H1 (cell line): ENCODE measurements at regions of chr13 and their contacts with region 1.

Region 1: DNA sequence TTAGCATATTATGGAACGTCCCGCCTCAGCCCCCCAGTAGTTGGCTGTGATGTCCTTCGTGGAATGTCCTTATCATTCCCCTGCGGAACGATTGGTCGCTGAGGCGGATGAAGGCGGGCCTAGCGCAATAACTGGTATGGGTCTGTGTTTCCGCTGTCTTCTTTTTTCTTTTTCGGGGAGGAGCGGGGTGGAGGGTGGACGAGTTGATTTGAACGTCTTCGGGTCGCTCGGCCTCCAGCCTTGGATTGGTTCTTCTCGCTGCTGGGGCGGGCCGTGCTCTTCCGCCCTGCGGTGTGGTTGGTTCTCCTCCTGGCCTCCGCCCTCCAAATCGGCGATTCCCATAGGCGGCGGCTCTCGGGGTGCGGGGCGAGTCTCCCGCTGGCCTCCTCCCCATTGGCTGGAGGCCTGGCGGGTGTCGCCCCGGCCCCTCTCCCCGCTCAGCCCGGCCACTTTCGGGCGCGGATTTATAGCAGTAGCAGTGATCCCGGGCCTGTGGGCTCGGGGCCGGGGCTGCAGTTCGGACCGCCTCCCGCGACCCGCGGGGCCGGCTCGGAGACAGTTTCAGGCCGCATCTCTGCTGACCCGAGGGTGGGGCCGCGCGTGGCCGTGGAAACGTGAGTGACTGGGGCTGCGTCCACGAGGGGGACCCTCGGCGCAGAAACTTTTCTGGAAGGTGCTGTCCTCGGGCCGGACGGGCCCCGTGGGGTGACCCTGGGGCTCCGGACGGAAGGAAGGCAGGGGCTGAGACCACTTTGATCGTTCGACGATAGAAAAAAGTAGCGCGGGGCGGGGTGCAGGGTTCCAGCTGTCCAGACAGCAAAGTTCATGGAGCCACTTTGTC is 2.1 kb downstream of the ING1 start:
- DNase-seq: peak; percentile 93 to 97
- H3K4me3 ChIP-seq: peak overlapping the region; percentile 77 to 98 (median 90)
- H3K27ac ChIP-seq: peak overlapping the region; percentile 24
- H3K4me1 ChIP-seq: peaks cover 0 to 2% (median 1%) of the 10 kb centered on the region in 4 experiments; a peak in 2 of 7 replicates
- H3K27me3 ChIP-seq: no peaks in the 10 kb centered on the region
- CTCF ChIP-seq: no peak
- EP300 ChIP-seq: no peak
- POLR2A ChIP-seq: peak in 1 of 2 experiments; percentile 63; a peak in 1 of 3 replicates
- RAD21 ChIP-seq: no peak

Region 2: DNA sequence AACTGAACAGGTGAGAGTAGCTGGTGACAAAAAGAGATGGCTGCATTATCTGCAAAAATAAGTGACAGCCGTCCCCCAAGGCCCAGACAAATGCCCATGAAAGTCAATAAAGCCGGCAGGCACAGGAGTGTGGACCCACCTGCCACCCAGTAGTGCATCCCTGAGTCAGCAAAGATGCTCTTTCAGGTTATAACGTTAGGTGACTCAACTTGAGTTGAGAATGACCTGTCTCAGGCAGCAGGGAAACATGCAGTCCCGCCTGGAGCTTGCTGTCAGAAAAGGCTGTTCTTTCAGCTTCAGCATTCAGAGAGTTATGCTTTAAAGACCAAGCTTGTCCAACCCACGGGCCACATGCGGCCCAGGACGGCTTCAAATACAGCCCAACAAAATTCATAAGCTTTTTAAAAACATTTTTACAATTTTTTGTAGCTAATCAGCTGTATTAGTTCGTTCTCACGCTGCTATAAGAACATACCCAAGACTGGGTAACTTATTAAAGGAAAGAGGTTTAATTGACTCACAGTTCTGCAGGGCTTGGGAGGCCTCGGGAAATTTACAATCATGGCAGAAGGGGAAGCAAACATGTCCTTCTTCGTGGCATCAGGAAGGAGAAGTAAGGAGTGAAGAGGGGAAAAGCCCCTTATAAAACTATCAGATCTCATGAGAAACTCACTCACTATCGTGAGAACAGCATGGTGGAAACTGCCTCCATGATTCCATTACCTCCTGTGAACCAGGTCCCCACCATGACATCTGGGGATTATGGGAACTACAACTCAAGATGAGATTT is 264.5 kb before region 1 on chr13:
- CTCF ChIA-PET with region 1: no interaction called
- POLR2A ChIA-PET with region 1: no interaction called
- DNase-seq: no peak
- H3K4me3 ChIP-seq: no peak overlapping the region
- H3K27ac ChIP-seq: no peak overlapping the region
- H3K4me1 ChIP-seq: peaks cover 0 to 5% (median 1%) of the 10 kb centered on the region in 4 experiments; a peak in 4 of 7 replicates
- H3K27me3 ChIP-seq: no peaks in the 10 kb centered on the region
- CTCF ChIP-seq: no peak
- EP300 ChIP-seq: no peak
- POLR2A ChIP-seq: no peak
- RAD21 ChIP-seq: no peak

Region 3: GRCh38 chr13:110690516-110690915 is 25.1 kb before region 1 on chr13:
- CTCF ChIA-PET with region 1: interaction called, 6 read pairs
- POLR2A ChIA-PET with region 1: interaction called, 14 read pairs
- DNase-seq: no peak
- H3K4me3 ChIP-seq: no peak overlapping the region
- H3K27ac ChIP-seq: no peak overlapping the region
- H3K4me1 ChIP-seq: no peaks in the 10 kb centered on the region
- H3K27me3 ChIP-seq: no peaks in the 10 kb centered on the region
- CTCF ChIP-seq: no peak
- EP300 ChIP-seq: no peak
- POLR2A ChIP-seq: no peak
- RAD21 ChIP-seq: no peak

Region 4: GRCh38 chr13:110698689-110699088 is 16.9 kb before region 1 on chr13:
- CTCF ChIA-PET with region 1: interaction called, 10 read pairs
- POLR2A ChIA-PET with region 1: interaction called, 17 read pairs
- DNase-seq: no peak
- H3K4me3 ChIP-seq: no peak overlapping the region
- H3K27ac ChIP-seq: no peak overlapping the region
- H3K4me1 ChIP-seq: peaks cover 0 to 3% (median under 1%) of the 10 kb centered on the region in 4 experiments; a peak in 1 of 7 replicates
- H3K27me3 ChIP-seq: no peaks in the 10 kb centered on the region
- CTCF ChIP-seq: no peak
- EP300 ChIP-seq: no peak
- POLR2A ChIP-seq: no peak
- RAD21 ChIP-seq: no peak

Region 5: DNA sequence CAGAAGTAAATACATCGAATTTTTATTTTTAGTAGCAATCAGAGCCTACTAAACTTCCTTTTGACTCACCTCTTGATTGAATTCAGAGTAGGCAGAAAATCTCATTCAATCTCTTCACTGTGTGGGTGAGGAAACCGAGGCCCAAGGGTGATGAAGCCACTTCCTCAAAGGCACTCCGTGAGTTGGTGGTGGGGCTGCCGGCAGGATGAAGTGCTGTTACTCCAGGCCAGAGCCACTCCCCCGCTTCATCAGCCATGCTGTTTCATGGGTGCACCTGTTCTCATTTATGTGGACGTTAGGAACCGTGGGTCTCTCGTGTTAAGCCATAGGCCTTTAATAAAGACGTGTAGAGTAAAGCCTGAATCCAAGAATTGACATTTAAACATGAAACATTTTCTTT is 11.1 kb after region 1 on chr13:
- CTCF ChIA-PET with region 1: interaction called, 3 read pairs
- POLR2A ChIA-PET with region 1: interaction called, 28 read pairs
- DNase-seq: no peak
- H3K4me3 ChIP-seq: no peak overlapping the region
- H3K27ac ChIP-seq: no peak overlapping the region
- H3K4me1 ChIP-seq: no peaks in the 10 kb centered on the region
- H3K27me3 ChIP-seq: no peaks in the 10 kb centered on the region
- CTCF ChIP-seq: no peak
- EP300 ChIP-seq: no peak
- POLR2A ChIP-seq: no peak
- RAD21 ChIP-seq: no peak

Region 6: GRCh38 chr13:110799246-110800236 is 83.9 kb after region 1 on chr13:
- CTCF ChIA-PET with region 1: no interaction called
- POLR2A ChIA-PET with region 1: interaction called, 12 read pairs
- DNase-seq: no peak
- H3K4me3 ChIP-seq: no peak overlapping the region
- H3K27ac ChIP-seq: no peak overlapping the region
- H3K4me1 ChIP-seq: peaks cover 0 to 10% (median 8%) of the 10 kb centered on the region in 4 experiments; a peak in 6 of 7 replicates
- H3K27me3 ChIP-seq: peaks cover 0 to 22% (median 12%) of the 10 kb centered on the region in 4 experiments; a peak in 4 of 7 replicates
- CTCF ChIP-seq: no peak
- EP300 ChIP-seq: no peak
- POLR2A ChIP-seq: no peak
- RAD21 ChIP-seq: no peak